ENCODE measurements at regions of chr16 and their contacts with region 1.

Region 1: GRCh38 chr16:48164907-48165726 is 9.3 kb upstream of the ABCC12 start:
- H3K4me3 ChIP-seq: no peak overlapping the region
- H3K27ac ChIP-seq: no peak overlapping the region
- H3K4me1 ChIP-seq: no peaks in the 10 kb centered on the region
- CTCF ChIP-seq: peak; percentile 87

Region 2: DNA sequence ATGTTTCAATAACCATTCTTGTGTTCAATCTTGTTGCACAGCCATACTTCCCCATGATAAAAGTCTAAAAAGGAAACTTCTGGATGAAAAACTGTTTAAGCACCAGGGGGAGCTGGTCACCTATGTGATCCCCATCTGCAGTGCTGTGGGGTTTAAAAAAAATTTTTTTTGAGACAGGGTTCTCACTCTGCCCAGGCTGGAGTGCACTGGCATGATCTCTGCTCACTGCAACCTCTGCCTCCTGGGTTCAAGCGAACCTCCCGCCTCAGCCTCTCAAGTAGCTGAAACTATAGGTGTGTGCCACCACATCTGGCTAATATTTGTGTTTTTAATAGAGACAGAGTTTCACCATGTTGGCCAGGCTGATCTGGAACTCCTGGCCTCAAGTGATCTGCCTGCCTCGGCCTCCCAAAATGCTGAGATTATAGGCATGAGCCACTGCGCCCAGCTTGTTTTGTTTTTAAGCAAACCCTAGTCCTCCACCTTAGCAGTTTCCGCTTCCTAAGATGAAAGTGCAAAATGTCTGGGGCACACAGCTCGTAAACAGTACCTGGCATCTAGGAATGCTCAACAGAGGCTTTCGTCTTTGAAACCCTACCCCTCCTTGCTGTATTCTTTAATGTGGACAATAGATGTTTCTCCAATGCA is 1217.1 kb before region 1 on chr16:
- CTCF ChIA-PET with region 1: interaction called, 19 read pairs
- POLR2A ChIA-PET with region 1: no interaction called
- H3K4me3 ChIP-seq: no peak overlapping the region
- H3K27ac ChIP-seq: no peak overlapping the region
- H3K4me1 ChIP-seq: no peaks in the 10 kb centered on the region
- CTCF ChIP-seq: peak; percentile 49

Measured in HEK293 (cell line).